MCF 10A (cell line): ENCODE measurements at regions of chr18 and their contacts with region 1.

Region 1: GRCh38 chr18:2948038-2948437 is 64.9 kb downstream of the LPIN2 start:
- DNase-seq: peak; percentile 48
- H3K4me3 Mint-ChIP-seq: no peak overlapping the region
- H3K27ac Mint-ChIP-seq: no peak overlapping the region
- H3K4me1 Mint-ChIP-seq: no peaks in the 10 kb centered on the region
- H3K27me3 Mint-ChIP-seq: no peaks in the 10 kb centered on the region
- CTCF ChIP-seq: peak; percentile 35

Region 2: GRCh38 chr18:2932247-2933181 is 15.5 kb before region 1 on chr18:
- CTCF ChIA-PET with region 1: interaction called, 18 read pairs
- POLR2A ChIA-PET with region 1: no interaction called
- intact Hi-C with region 1: no loop called
- DNase-seq: peak; percentile 71
- H3K4me3 Mint-ChIP-seq: no peak overlapping the region
- H3K27ac Mint-ChIP-seq: no peak overlapping the region
- H3K4me1 Mint-ChIP-seq: peaks cover 10% of the 10 kb centered on the region
- H3K27me3 Mint-ChIP-seq: no peaks in the 10 kb centered on the region
- CTCF ChIP-seq: peak; percentile 69

Region 3: DNA sequence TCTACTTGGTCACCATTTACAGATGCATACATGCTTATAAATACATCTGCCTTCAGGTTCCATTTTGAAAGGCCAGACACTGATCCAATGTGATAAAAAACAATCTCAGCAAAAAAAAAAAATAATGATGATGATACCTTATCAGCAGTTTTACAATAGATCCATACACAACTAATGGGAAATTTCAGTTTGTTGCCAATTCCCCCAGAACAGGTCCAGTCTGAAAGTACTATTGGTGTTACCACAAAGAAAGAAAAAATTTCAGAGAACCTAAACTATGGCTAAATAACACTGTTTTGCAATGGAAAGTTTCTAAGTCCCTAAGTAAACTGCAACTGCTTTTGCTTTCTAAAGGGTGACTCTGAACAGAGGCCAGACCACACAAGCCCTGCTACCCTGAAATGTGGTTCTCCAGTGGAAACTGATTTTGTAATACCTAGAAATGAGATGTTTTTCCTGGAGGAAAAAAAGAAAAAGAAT is 10.8 kb after region 1 on chr18:
- CTCF ChIA-PET with region 1: interaction called, 10 read pairs
- POLR2A ChIA-PET with region 1: interaction called, 5 read pairs
- intact Hi-C with region 1: no loop called
- DNase-seq: no peak
- H3K4me3 Mint-ChIP-seq: no peak overlapping the region
- H3K27ac Mint-ChIP-seq: no peak overlapping the region
- H3K4me1 Mint-ChIP-seq: no peaks in the 10 kb centered on the region
- H3K27me3 Mint-ChIP-seq: no peaks in the 10 kb centered on the region
- CTCF ChIP-seq: no peak

Region 4: GRCh38 chr18:2985628-2986027 is 37.6 kb after region 1 on chr18:
- CTCF ChIA-PET with region 1: interaction called, 66 read pairs
- POLR2A ChIA-PET with region 1: interaction called, 10 read pairs
- intact Hi-C with region 1: loop called (anchors 5 kb)
- DNase-seq: peak; percentile 52
- H3K4me3 Mint-ChIP-seq: no peak overlapping the region
- H3K27ac Mint-ChIP-seq: no peak overlapping the region
- H3K4me1 Mint-ChIP-seq: peaks cover 35% of the 10 kb centered on the region
- H3K27me3 Mint-ChIP-seq: no peaks in the 10 kb centered on the region
- CTCF ChIP-seq: peak; percentile 37